Posterior vena cava (tissue), 2 donors: ENCODE measurements at regions of chr19 and their contacts with region 1.

Region 1: GRCh38 chr19:45523642-45524256 is 16.5 kb downstream of the VASP start:
- DNase-seq: peak; percentile 93

Region 2: DNA sequence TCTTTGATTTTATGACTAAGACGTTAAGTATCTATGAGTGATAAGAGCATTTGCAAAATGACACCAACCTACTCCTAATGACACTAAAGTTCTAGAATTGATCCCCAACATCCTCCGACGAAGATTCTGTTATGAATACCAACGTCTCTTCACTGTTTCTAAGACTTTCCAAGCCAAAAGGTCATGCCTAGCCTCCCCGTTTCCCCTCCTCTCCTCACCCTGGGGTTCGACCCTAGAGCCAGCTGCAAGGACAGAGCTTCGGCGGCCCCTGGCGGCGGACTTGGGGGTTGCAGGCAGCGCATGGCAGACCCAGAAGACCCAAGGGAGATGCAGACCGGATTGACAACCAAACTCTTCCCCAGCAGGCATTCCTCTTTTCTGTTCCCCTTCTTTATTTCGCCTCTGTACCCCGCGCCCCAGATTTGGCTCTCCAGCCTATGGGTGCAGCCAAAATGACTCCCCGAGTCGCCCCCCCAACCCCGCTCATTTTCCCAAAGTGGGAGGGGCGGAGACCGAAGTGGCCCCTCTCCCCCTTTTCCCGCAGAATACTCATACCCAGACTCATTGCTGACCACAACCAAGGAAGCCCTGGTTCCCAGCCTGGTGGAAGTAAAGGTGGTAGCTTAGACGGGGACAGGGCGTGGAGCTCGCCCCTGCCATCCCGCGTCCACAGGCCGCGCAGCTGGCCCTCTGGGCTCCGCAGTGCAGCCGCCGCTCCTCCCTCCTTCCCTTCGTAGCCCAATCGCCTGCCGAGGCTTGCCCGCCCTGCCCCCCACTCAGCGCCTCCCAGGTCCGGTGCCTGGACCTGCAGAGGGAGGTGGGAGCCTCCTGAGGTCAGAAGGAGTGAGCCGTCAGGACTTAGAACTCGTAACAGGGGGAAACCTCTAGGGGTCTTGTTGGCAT is 119.5 kb after region 1 on chr19:
- intact Hi-C with region 1: loop called in 1 of 2 experiments (anchors 10 kb)
- DNase-seq: peak; percentile 95

Region 3: DNA sequence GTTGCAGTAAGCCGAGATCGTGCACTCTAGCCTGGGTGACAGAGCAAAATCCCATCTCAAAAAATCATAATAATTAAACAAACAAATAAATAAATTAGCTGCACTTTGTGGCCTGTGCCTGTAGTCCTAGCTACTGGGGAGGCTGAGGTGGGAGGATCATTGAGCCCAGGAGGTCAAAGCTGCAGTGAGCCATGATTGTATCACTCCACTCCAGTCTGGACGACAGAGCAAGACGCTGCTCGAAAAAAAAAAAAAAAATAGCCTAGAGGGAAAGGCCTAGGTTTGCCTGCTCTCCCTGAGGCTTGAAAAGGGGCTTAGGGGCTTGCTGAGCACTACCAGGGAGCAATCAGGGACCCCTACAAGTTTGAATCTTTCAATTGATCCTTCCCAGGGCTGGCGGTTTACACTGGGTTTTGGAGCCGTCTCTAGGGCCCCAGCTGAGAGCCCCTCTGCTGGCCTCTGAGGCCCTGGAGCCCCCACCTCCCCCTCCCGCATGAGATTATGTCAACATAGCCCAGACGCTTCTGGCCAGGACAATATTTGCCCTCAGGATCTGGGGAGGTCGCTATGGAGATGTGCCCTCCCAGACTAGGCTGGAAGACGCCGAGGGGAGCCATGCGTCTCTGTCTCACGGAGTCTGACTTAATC is 133.9 kb after region 1 on chr19:
- intact Hi-C with region 1: loop called in 1 of 2 experiments (anchors 10 kb)
- DNase-seq: no peak